ENCODE measurements at regions of chr14 and their contacts with region 1.

Region 1: GRCh38 chr14:61992139-61992538 is 229.9 kb downstream of the SNAPC1 start:
- DNase-seq: no peak
- H3K4me3 ChIP-seq: no peak overlapping the region
- H3K27ac ChIP-seq: no peak overlapping the region
- H3K4me1 ChIP-seq: no peaks in the 10 kb centered on the region
- H3K27me3 ChIP-seq: no peaks in the 10 kb centered on the region
- CTCF ChIP-seq: no peak
- EP300 ChIP-seq: no peak
- POLR2A ChIP-seq: no peak

Region 2: GRCh38 chr14:61076556-61076955 is 915.6 kb before region 1 on chr14:
- intact Hi-C with region 1: loop called in 1 of 4 experiments (anchors 5 kb)
- DNase-seq: no peak
- H3K4me3 ChIP-seq: no peak overlapping the region
- H3K27ac ChIP-seq: no peak overlapping the region
- H3K4me1 ChIP-seq: no peaks in the 10 kb centered on the region
- H3K27me3 ChIP-seq: no peaks in the 10 kb centered on the region
- CTCF ChIP-seq: no peak
- EP300 ChIP-seq: no peak
- POLR2A ChIP-seq: no peak

Region 3: GRCh38 chr14:61719344-61720293 is 272.5 kb before region 1 on chr14:
- intact Hi-C with region 1: no loop called
- DNase-seq: no peak
- H3K4me3 ChIP-seq: no peak overlapping the region
- H3K27ac ChIP-seq: no peak overlapping the region
- H3K4me1 ChIP-seq: peaks cover 7% of the 10 kb centered on the region
- H3K27me3 ChIP-seq: no peaks in the 10 kb centered on the region
- CTCF ChIP-seq: no peak
- EP300 ChIP-seq: no peak
- POLR2A ChIP-seq: no peak

Region 4: DNA sequence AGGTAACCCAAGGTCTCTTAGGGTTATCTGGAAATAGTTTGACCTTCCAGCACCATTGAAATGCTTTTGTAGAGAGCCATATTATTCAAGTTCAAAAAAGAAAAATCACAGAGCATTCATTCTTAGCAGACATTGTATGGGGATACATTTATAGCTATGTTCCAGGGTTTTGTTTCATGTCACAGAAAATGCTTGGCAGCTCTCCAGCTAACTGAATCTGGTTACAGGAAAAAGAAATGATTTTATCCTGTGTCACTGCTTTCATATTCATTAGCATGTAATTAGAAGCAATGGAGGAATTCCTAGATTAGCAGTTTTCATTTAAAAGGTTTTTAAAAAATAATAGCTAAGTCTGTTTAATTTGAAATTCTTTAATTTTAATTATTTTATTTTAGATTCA is 151.0 kb before region 1 on chr14:
- intact Hi-C with region 1: no loop called
- DNase-seq: no peak
- H3K4me3 ChIP-seq: no peak overlapping the region
- H3K27ac ChIP-seq: no peak overlapping the region
- H3K4me1 ChIP-seq: no peaks in the 10 kb centered on the region
- H3K27me3 ChIP-seq: no peaks in the 10 kb centered on the region
- CTCF ChIP-seq: no peak
- EP300 ChIP-seq: no peak
- POLR2A ChIP-seq: no peak

Region 5: DNA sequence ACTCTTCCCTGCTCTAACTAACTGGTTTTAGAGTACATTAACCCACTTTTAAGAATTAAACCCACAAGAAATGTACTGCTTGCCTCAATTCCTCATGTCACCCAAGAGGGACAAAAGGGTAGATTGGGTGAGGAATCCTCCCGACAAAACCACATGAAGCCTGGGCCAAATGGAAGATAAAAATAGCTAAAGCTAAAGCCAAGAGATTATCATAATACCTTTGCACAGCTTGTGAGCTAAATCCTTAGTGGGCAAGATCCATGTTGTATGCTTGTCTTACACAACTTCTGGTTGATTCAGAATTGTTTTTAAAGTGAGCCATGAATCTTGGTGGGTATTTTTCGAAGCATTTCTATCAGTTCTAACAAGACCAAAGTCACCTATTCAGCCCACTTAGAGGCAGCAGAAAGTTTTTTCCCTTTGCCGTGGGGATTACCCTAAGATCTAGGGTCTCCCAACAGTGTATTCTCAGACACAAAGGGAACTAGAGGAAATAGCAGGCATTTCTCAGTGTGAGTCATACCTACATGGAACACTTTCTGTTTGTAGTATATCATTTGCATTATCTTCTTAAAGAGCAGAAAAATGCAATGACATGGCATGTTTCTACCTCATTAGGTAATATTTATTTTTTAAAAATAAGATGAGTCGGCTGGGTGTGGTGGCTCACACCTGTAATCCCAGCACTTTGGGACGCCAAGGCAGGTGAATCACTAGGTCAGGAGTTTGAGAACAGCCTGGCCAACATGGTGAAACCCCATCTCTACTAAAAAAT is 436.5 kb after region 1 on chr14:
- intact Hi-C with region 1: no loop called
- DNase-seq: no peak
- H3K4me3 ChIP-seq: no peak overlapping the region
- H3K27ac ChIP-seq: no peak overlapping the region
- H3K4me1 ChIP-seq: no peaks in the 10 kb centered on the region
- H3K27me3 ChIP-seq: no peaks in the 10 kb centered on the region
- CTCF ChIP-seq: no peak
- EP300 ChIP-seq: no peak
- POLR2A ChIP-seq: no peak